Dendritic cell treated with granulocyte-macrophage colony-stimulating factor and Interleukin-4, amounts not matched to agents 40 ng/mL and 50 ng/mL, for 4 days (primary cell): ENCODE measurements at regions of chr10 and their contacts with region 1.

Region 1: DNA sequence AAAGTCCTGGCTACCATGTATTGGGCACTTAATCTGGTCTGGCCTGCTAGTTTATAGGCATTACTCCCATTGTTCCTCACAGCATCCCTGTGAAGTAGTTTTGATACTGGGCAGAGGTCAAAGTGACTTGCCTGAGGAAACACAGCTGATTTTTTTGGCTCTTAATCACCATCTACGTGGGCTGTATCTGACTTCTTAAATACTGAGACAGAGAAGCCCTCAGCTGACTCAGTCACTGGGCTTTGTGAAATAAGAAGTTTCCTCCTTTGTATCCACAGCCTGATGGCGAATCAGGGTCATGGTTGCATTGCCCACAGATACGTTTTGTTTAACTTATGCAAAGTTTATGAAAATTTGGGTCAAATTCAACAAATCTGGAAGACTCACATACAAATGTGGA is 13.2 kb downstream of the TACR2 start:
- H3K4me3 Mint-ChIP-seq: no peak overlapping the region
- H3K27ac Mint-ChIP-seq: no peak overlapping the region
- H3K4me1 Mint-ChIP-seq: peaks cover 30% of the 10 kb centered on the region
- H3K27me3 Mint-ChIP-seq: peaks cover 2% of the 10 kb centered on the region

Region 2: GRCh38 chr10:68981074-68981473 is 422.4 kb before region 1 on chr10:
- intact Hi-C with region 1: loop called (anchors 5 kb)
- H3K4me3 Mint-ChIP-seq: no peak overlapping the region
- H3K27ac Mint-ChIP-seq: no peak overlapping the region
- H3K4me1 Mint-ChIP-seq: no peaks in the 10 kb centered on the region
- H3K27me3 Mint-ChIP-seq: no peaks in the 10 kb centered on the region

Region 3: GRCh38 chr10:69318106-69318866 is 85.2 kb before region 1 on chr10:
- intact Hi-C with region 1: no loop called
- H3K4me3 Mint-ChIP-seq: peak overlapping the region; percentile 87
- H3K27ac Mint-ChIP-seq: peak overlapping the region; percentile 87
- H3K4me1 Mint-ChIP-seq: peaks cover 44% of the 10 kb centered on the region
- H3K27me3 Mint-ChIP-seq: no peaks in the 10 kb centered on the region

Region 4: DNA sequence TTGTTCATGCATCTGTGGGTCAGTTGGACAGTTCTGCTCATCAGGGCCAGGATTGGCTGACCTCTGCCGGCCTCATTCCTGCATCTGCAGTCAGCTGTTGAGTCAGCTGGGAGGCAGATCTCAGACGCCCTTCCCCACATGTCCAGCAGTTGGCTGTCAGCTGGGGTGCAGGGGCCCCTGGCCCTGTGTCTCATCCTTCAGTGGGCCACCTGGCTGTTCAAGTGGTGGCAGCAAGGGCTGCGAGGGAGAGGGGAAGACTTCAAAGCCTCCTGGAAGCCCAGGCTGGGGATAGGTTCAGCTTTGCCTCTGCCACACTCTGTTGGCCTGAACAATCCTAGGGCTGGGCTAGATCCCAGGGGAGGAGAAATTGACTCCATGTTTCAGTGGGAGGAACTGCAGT is 20.0 kb before region 1 on chr10:
- intact Hi-C with region 1: no loop called
- H3K4me3 Mint-ChIP-seq: no peak overlapping the region
- H3K27ac Mint-ChIP-seq: no peak overlapping the region
- H3K4me1 Mint-ChIP-seq: no peaks in the 10 kb centered on the region
- H3K27me3 Mint-ChIP-seq: no peaks in the 10 kb centered on the region